Activated CD4-positive, alpha-beta T cell treated with anti-CD3 and anti-CD28 coated beads, Interleukin-2, amount 10 ng/mL, durations not matched to agents 24 days and 14 days (primary cell): ENCODE measurements at regions of chr13 and their contacts with region 1.

Region 1: DNA sequence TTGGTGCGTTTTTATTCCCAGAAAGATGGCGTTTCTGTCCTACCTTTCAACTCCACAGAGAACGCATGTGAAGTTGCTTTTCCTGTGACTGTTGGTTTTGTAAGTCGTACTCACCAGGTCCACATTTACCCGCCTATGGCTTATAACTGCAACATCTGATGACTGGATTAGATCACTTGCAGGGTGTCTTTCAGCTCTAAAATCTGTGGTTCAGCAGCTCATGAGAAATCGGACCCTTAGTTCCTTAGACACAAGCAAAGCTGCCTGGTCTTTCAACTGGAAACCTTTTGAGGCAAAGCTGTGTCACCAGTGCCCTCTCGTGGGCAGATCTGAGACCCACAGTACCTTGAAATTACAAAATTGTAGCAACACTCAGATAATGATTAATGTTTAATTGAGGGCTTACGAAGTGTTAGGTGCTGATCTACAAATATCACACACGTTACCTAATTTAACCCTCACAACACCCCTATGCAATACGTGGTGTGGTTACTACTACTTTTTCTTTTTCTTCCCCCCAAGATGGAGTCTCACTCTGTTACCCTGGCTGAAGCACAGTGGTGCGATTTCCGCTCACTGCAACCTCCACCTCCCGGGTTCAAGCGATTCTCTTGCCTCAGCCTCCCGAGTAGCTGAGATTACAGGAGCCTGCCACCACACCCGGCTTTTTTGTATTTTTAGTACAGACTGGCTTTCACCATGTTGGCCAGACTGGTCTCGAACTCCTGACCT is 65.4 kb downstream of the RUBCNL start:
- DNase-seq: peak; percentile 91
- H3K4me3 Mint-ChIP-seq: peak overlapping the region; percentile 88
- H3K27ac Mint-ChIP-seq: peak overlapping the region; percentile 93
- H3K4me1 Mint-ChIP-seq: peaks cover 24% of the 10 kb centered on the region
- H3K27me3 Mint-ChIP-seq: no peaks in the 10 kb centered on the region

Region 2: GRCh38 chr13:45623515-45624090 is 698.1 kb before region 1 on chr13:
- intact Hi-C with region 1: loop called (anchors 5 kb)
- DNase-seq: peak; percentile 63
- H3K4me3 Mint-ChIP-seq: no peak overlapping the region
- H3K27ac Mint-ChIP-seq: no peak overlapping the region
- H3K4me1 Mint-ChIP-seq: no peaks in the 10 kb centered on the region
- H3K27me3 Mint-ChIP-seq: peaks cover 41% of the 10 kb centered on the region

Region 3: DNA sequence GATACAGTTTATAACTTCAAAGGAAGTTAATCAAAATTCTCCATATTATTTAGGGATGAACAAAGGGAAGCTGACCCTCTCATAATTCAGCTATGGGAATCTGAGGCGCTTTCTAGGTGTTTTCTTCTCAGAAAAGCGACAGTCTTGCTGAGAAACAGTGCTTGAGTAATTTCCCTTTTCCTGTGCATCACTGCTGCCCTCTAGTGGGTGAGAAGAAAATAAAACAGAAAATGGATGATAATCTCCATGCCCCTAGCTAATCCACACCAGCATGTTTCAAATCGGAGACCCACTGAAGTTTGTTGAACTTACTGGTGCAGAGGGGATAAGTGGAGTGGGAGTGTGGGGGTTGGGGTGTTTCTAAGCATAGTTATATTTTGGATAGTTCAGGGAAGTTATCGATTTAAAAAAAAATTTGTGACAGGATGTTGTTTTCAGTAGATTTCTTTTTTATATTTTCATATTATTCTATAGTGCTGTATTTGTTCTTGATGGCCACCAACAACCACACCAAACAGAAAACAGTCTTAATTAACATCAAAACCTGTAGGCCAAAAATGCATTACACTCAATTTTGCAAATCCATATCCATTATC is 161.1 kb before region 1 on chr13:
- intact Hi-C with region 1: loop called (anchors 10 kb)
- DNase-seq: peak; percentile 85
- H3K4me3 Mint-ChIP-seq: peak overlapping the region; percentile 76
- H3K27ac Mint-ChIP-seq: peak overlapping the region; percentile 83
- H3K4me1 Mint-ChIP-seq: peaks cover 48% of the 10 kb centered on the region
- H3K27me3 Mint-ChIP-seq: no peaks in the 10 kb centered on the region

Region 4: DNA sequence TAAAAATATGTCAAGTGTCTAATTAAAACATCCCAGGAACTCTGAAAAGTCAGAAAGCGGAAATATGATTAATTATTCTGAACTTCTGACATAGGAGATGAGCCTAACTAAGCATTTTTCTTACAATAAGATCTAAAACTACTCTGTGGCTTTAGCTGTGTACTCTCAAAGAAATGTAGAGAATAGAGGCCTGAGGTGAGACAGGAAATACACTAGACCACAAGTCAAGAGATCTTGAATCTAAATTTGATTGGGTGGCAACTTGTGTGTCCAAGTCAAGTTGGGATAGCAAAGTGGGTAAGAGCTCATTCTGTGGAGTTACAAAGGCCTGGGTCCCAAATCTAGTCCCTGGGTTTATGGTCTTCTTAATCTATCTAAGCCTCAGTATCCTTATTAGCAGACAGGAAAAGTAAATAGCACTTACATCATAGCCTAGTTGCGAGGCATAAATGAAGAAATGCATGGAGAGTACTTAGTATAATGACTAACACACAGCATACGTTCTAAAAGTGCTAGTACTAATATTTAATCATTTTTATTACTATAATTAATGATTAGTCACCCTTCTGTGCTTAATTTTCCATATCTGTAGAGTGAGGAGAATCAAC is 119.4 kb before region 1 on chr13:
- intact Hi-C with region 1: no loop called
- DNase-seq: peak; percentile 72
- H3K4me3 Mint-ChIP-seq: peak overlapping the region; percentile 40
- H3K27ac Mint-ChIP-seq: peak overlapping the region; percentile 76
- H3K4me1 Mint-ChIP-seq: peaks cover 35% of the 10 kb centered on the region
- H3K27me3 Mint-ChIP-seq: no peaks in the 10 kb centered on the region

Region 5: GRCh38 chr13:46288570-46289259 is 32.9 kb before region 1 on chr13:
- intact Hi-C with region 1: loop called (anchors 5 kb)
- DNase-seq: peak; percentile 80
- H3K4me3 Mint-ChIP-seq: no peak overlapping the region
- H3K27ac Mint-ChIP-seq: no peak overlapping the region
- H3K4me1 Mint-ChIP-seq: peaks cover 19% of the 10 kb centered on the region
- H3K27me3 Mint-ChIP-seq: no peaks in the 10 kb centered on the region

Region 6: GRCh38 chr13:46341112-46341711 is 19.6 kb after region 1 on chr13:
- intact Hi-C with region 1: loop called (anchors 2 kb)
- DNase-seq: peak; percentile 67
- H3K4me3 Mint-ChIP-seq: peak overlapping the region; percentile 15
- H3K27ac Mint-ChIP-seq: peak overlapping the region; percentile 79
- H3K4me1 Mint-ChIP-seq: peaks cover 38% of the 10 kb centered on the region
- H3K27me3 Mint-ChIP-seq: no peaks in the 10 kb centered on the region